ENCODE measurements at regions of chr9 and their contacts with region 1.

Region 1: GRCh38 chr9:38671748-38672147 is 48.2 kb downstream of the FAM240B start:
- DNase-seq: no peak
- H3K4me3 ChIP-seq: no peak overlapping the region
- H3K27ac ChIP-seq: no peak overlapping the region
- H3K4me1 ChIP-seq: peaks cover 3% of the 10 kb centered on the region
- H3K27me3 ChIP-seq: no peaks in the 10 kb centered on the region
- CTCF ChIP-seq: no peak
- POLR2A ChIP-seq: no peak

Region 2: GRCh38 chr9:38620483-38621433 is 51.0 kb before region 1 on chr9 and contains the start of gene ANKRD18A:
- CTCF ChIA-PET with region 1: interaction called, 4 read pairs
- POLR2A ChIA-PET with region 1: no interaction called
- dilution Hi-C with region 1: no loop called
- intact Hi-C with region 1: loop called (anchors 5 kb)
- DNase-seq: peak; percentile 57
- H3K4me3 ChIP-seq: peak within 1 kb of the TSS; percentile 34 to 52 (median 41)
- H3K27ac ChIP-seq: no peak within 1 kb of the TSS
- H3K4me1 ChIP-seq: peaks cover 21% of the 10 kb centered on the region
- H3K27me3 ChIP-seq: peaks cover 22 to 50% of the 10 kb centered on the region in 2 experiments
- CTCF ChIP-seq: peak; percentile 53 to 86
- POLR2A ChIP-seq: no peak
- total RNA-seq, gene ANKRD18A: 0.21 TPM in 1 of 2 replicates, not detected in the other

Measured in endothelial cell of umbilical vein (primary cell).